ENCODE measurements at regions of chr2 and their contacts with region 1.

Region 1: GRCh38 chr2:216222650-216223352 is 113.7 kb downstream of the XRCC5 start:
- DNase-seq: peak; percentile 64
- ATAC-seq: peak; percentile 79
- H3K4me3 ChIP-seq: no peak overlapping the region
- H3K27ac ChIP-seq: peak overlapping the region; percentile 71
- H3K4me1 ChIP-seq: peaks cover 26% of the 10 kb centered on the region
- H3K27me3 ChIP-seq: no peaks in the 10 kb centered on the region
- CTCF ChIP-seq: peak; percentile 56 to 60 (median 57); a peak in 5 of 6 replicates
- EP300 ChIP-seq: peak in 1 of 2 experiments; percentile 66; a peak in 1 of 4 replicates
- POLR2A ChIP-seq: no peak
- RAD21 ChIP-seq: peak; percentile 84

Region 2: DNA sequence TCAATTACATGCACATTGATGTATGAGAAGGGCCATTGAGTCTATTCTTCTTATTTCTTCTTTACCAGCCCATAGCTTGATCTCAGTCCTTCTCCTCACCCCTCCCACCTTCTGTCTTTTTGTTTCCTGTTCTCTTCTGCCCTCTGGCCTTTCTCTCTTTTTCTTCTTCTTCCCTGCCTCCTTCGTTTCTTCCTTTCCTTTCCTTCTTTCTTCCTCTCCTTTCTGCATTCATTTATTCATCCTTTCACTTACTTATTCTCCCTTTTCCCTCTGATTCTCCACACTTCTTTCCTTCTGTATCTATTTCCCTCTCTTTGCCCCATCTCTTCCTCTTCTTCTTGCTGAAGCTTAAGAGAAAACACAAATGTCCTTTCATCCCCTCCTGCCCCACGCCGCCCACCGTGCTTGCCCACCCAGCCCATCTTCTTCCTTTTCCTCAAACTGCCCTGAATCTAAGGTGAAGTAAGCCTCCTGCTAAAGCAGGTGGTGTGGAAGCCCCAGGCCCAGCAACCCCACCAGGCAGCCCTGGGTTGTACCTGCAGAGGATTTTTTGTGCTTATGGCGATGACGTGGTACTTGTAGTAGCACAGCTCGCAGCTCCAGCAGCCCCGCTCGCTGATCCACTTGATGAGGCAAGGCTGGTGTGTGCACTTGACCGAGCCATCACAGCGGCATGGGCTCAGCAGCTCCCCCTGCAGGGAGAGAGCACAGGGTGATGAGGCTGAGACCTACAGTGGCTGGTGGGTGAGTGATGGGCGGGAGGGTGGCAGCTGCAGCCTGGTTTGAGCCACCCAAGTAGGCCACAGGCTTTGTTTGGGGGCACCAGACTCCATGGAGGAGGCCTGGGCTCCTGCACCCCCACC is 60.5 kb after region 1 on chr2:
- CTCF ChIA-PET with region 1: interaction called, 32 read pairs
- POLR2A ChIA-PET with region 1: no interaction called
- RAD21 ChIA-PET with region 1: interaction called, 20 read pairs
- SMC1A ChIA-PET with region 1: interaction called, 12 read pairs
- in situ Hi-C with region 1: no loop called
- intact Hi-C with region 1: loop called (anchors 2 kb)
- DNase-seq: no peak
- ATAC-seq: peak; percentile 98
- H3K4me3 ChIP-seq: no peak overlapping the region
- H3K27ac ChIP-seq: no peak overlapping the region
- H3K4me1 ChIP-seq: no peaks in the 10 kb centered on the region
- H3K27me3 ChIP-seq: no peaks in the 10 kb centered on the region
- CTCF ChIP-seq: peak; percentile 55 to 84 (median 63)
- EP300 ChIP-seq: no peak
- POLR2A ChIP-seq: no peak
- RAD21 ChIP-seq: peak; percentile 54

Region 3: DNA sequence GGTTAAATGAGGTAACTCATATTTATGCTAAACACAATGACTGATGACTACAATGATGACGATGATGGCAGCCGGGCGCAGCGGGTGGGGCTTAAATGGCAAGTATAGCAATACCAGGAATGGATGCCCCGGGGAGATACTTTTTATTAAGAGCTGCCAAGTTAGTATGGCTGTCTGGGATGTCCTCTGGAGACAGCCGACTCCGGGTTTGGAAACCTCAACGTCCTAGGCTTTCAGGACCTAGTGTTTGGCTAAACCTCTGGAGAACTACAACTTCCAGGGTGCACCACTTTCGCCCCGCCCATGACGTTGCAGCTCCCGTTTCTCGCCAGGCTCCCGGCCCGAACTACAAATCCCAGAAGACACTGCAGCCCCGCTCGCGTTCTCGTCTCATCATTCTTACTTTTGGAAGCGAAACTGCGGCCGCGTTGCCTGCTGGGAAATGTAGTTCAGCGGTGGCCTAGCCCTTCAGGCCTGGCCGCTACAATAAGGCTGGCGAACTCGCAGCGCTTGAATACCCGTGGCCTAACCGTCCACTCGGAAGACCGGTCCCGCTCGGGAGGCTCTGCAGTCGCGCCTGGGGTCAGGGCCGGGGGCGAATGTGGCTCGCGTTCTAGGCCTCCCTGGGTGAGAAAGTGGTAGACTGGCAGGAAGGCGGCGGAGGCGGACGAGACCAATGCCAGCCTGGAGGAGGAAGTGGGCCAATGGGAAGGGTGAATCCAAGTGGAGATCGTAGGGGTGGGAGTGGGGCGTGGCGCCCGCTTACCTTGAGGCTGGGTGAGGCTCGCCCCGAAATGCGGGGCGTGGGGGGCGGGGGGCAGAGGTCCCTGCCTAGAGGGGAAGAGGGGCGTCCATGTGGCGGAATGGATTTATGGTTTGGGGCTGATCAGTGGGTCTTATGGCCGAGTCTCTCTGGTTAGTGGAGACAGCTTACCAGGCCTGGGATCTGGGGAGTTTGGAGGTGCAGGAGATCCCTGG is 189.5 kb after region 1 on chr2 and contains the start of gene SMARCAL1:
- CTCF ChIA-PET with region 1: interaction called, 116 read pairs
- POLR2A ChIA-PET with region 1: no interaction called
- RAD21 ChIA-PET with region 1: interaction called, 20 read pairs
- SMC1A ChIA-PET with region 1: interaction called, 84 read pairs
- in situ Hi-C with region 1: loop called (anchors 10 kb)
- intact Hi-C with region 1: no loop called
- DNase-seq: peak; percentile 92
- ATAC-seq: peak; percentile 92
- H3K4me3 ChIP-seq: peak within 1 kb of the TSS; percentile 82
- H3K27ac ChIP-seq: peak within 1 kb of the TSS; percentile 97
- H3K4me1 ChIP-seq: peaks cover 10% of the 10 kb centered on the region
- H3K27me3 ChIP-seq: no peaks in the 10 kb centered on the region
- CTCF ChIP-seq: no peak
- EP300 ChIP-seq: no peak
- POLR2A ChIP-seq: peak; percentile 89
- RAD21 ChIP-seq: no peak
- polyA plus RNA-seq, gene SMARCAL1: 10.8 to 11.4 TPM

Region 4: GRCh38 chr2:216519154-216519762 is 296.5 kb after region 1 on chr2:
- CTCF ChIA-PET with region 1: interaction called, 7 read pairs
- POLR2A ChIA-PET with region 1: no interaction called
- RAD21 ChIA-PET with region 1: interaction called, 3 read pairs
- SMC1A ChIA-PET with region 1: interaction called, 7 read pairs
- in situ Hi-C with region 1: no loop called
- intact Hi-C with region 1: loop called (anchors 5 kb)
- DNase-seq: no peak
- ATAC-seq: peak; percentile 94
- H3K4me3 ChIP-seq: no peak overlapping the region
- H3K27ac ChIP-seq: no peak overlapping the region
- H3K4me1 ChIP-seq: no peaks in the 10 kb centered on the region
- H3K27me3 ChIP-seq: no peaks in the 10 kb centered on the region
- CTCF ChIP-seq: peak; percentile 63 to 75 (median 64)
- EP300 ChIP-seq: no peak
- POLR2A ChIP-seq: no peak
- RAD21 ChIP-seq: peak; percentile 74

Measured in GM12878 (cell line).